Activated CD8-positive, alpha-beta T cell treated with anti-CD3 and anti-CD28 coated beads for 36 hours (primary cell): ENCODE measurements at regions of chr5 and their contacts with region 1.

Region 1: GRCh38 chr5:35926389-35927051 is 11.9 kb downstream of the CAPSL start:
- DNase-seq: peak; percentile 79
- ATAC-seq: peak; percentile 63
- H3K4me3 Mint-ChIP-seq: peak overlapping the region; percentile 10
- H3K27ac Mint-ChIP-seq: no peak overlapping the region
- H3K4me1 Mint-ChIP-seq: peaks cover 38% of the 10 kb centered on the region
- H3K27me3 Mint-ChIP-seq: no peaks in the 10 kb centered on the region
- CTCF ChIP-seq: peak; percentile 94

Region 2: DNA sequence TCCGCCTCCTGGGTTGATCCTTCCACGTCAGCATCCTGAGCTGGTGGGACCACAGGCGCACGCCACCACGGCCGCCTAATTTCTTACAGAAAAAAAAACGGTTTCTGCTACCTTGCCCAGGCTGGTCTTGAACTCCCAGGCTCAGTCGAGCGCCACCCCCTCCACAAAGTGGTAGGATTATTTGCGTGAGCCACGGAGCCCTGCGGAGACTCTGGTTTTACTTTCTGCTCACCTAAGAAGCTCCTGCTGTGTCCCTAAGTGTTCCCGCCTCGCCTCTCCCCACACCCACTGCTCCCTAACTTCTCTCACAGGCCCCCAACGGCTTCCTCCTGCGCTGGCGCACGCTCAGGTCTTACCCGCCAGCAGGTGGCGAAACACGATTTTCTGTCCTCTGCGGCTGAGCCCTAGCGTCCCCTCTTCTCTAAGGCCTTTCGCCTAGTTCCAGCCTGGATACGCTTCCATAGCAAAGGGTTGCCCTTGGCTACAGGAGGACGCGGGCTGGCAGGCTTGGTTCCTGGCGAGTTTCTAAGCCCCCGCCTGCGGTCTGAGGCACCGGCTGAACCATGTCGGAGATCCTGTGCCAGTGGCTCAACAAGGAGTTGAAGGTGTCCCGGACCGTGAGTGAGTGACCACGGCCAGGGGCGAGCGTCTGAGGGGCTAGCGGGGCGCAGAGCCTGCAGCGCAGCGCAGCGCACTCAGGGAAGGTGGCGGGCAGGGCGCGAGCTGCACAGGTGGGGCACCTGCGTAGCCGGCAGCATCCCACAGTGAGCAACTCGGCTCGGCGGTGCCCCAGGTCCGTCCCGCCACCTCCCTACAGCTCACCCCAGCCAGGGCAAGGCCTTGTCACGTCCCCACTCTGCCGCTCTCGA is 308.9 kb before region 1 on chr5 and contains the start of gene SPEF2:
- CTCF ChIA-PET with region 1: interaction called, 33 read pairs
- POLR2A ChIA-PET with region 1: no interaction called
- intact Hi-C with region 1: loop called (anchors 1 kb)
- DNase-seq: peak; percentile 89
- ATAC-seq: peak; percentile 92
- H3K4me3 Mint-ChIP-seq: peak within 1 kb of the TSS; percentile 84
- H3K27ac Mint-ChIP-seq: peak within 1 kb of the TSS; percentile 97
- H3K4me1 Mint-ChIP-seq: peaks cover 25% of the 10 kb centered on the region
- H3K27me3 Mint-ChIP-seq: no peaks in the 10 kb centered on the region
- CTCF ChIP-seq: peak; percentile 84
- total RNA-seq, gene SPEF2: 8.4 to 9.9 TPM

Region 3: GRCh38 chr5:35651002-35651756 is 275.3 kb before region 1 on chr5:
- CTCF ChIA-PET with region 1: interaction called, 151 read pairs
- POLR2A ChIA-PET with region 1: interaction called, 5 read pairs
- intact Hi-C with region 1: loop called (anchors 1 kb)
- DNase-seq: peak; percentile 78
- ATAC-seq: peak; percentile 98
- H3K4me3 Mint-ChIP-seq: no peak overlapping the region
- H3K27ac Mint-ChIP-seq: no peak overlapping the region
- H3K4me1 Mint-ChIP-seq: peaks cover 12% of the 10 kb centered on the region
- H3K27me3 Mint-ChIP-seq: no peaks in the 10 kb centered on the region
- CTCF ChIP-seq: peak; percentile 46

Region 4: GRCh38 chr5:35665096-35665495 is 261.4 kb before region 1 on chr5:
- CTCF ChIA-PET with region 1: interaction called, 12 read pairs
- POLR2A ChIA-PET with region 1: interaction called, 3 read pairs
- intact Hi-C with region 1: no loop called
- DNase-seq: no peak
- ATAC-seq: no peak
- H3K4me3 Mint-ChIP-seq: no peak overlapping the region
- H3K27ac Mint-ChIP-seq: peak overlapping the region; percentile 8
- H3K4me1 Mint-ChIP-seq: peaks cover 43% of the 10 kb centered on the region
- H3K27me3 Mint-ChIP-seq: no peaks in the 10 kb centered on the region
- CTCF ChIP-seq: no peak

Region 5: DNA sequence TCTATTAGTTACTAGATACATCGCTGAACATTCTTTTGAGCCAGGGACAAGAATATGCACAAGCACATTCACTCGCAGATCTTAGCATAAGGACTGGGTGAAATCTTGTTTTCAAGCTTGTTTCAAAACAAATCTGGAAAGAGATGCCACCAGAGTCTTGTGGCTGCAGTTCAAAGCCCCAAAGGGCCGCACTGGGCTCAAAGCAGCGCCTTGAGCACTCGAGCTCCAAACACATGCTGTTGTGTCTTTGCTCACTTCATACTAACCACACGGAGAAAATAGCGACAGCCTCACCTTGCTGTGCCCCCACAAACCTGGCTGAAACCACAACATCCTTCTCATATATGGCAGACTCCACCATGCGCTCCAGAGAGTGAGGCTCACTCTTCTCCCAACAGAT is 104.0 kb before region 1 on chr5:
- CTCF ChIA-PET with region 1: interaction called, 32 read pairs
- POLR2A ChIA-PET with region 1: interaction called, 4 read pairs
- intact Hi-C with region 1: no loop called
- DNase-seq: peak; percentile 82
- ATAC-seq: peak; percentile 28
- H3K4me3 Mint-ChIP-seq: peak overlapping the region; percentile 55
- H3K27ac Mint-ChIP-seq: peak overlapping the region; percentile 92
- H3K4me1 Mint-ChIP-seq: peaks cover 87% of the 10 kb centered on the region
- H3K27me3 Mint-ChIP-seq: no peaks in the 10 kb centered on the region
- CTCF ChIP-seq: no peak

Region 6: GRCh38 chr5:35902046-35902676 is 24.4 kb before region 1 on chr5:
- CTCF ChIA-PET with region 1: interaction called, 16 read pairs
- POLR2A ChIA-PET with region 1: interaction called, 9 read pairs
- intact Hi-C with region 1: loop called (anchors 2 kb)
- DNase-seq: peak; percentile 51
- ATAC-seq: peak; percentile 61
- H3K4me3 Mint-ChIP-seq: no peak overlapping the region
- H3K27ac Mint-ChIP-seq: peak overlapping the region; percentile 60
- H3K4me1 Mint-ChIP-seq: peaks cover 86% of the 10 kb centered on the region
- H3K27me3 Mint-ChIP-seq: no peaks in the 10 kb centered on the region
- CTCF ChIP-seq: no peak

Region 7: DNA sequence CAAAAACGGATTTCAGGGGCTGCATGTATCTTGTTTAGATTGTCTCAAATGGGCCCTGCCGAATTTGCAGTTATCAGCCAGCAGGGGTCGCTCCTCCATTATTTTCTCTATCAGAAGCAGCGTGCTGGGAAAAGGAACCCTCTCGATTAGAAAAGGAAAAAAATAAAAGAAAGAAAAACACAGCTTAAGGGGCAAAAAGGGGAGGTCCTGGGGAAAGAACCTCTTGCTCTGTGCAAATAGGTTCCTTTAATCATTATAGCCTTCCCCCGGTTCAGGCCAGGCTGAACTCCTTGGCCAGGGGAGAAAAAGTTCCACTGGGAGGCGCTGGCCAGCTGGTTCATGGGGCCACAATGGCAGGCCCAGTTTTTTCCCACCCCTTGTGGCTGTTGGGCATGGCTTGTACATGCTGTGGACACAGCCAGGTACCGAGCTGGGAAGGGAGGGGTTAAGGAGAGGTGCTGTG is 36.9 kb after region 1 on chr5:
- CTCF ChIA-PET with region 1: no interaction called
- POLR2A ChIA-PET with region 1: no interaction called
- intact Hi-C with region 1: no loop called
- DNase-seq: peak; percentile 27
- ATAC-seq: no peak
- H3K4me3 Mint-ChIP-seq: no peak overlapping the region
- H3K27ac Mint-ChIP-seq: no peak overlapping the region
- H3K4me1 Mint-ChIP-seq: no peaks in the 10 kb centered on the region
- H3K27me3 Mint-ChIP-seq: peaks cover 11% of the 10 kb centered on the region
- CTCF ChIP-seq: peak; percentile 67